ENCODE measurements at regions of chr6 and their contacts with region 1.

Region 1: GRCh38 chr6:28863604-28864320 is 60.0 kb downstream of the TRIM27 start:
- DNase-seq: peak; percentile 60 to 93 (median 89)
- ATAC-seq: peak; percentile 64
- H3K4me3 ChIP-seq: peak overlapping the region; percentile 95
- H3K4me3 Mint-ChIP-seq: peak overlapping the region; percentile 90 to 98 (median 92)
- H3K27ac ChIP-seq: peak overlapping the region; percentile 75
- H3K27ac Mint-ChIP-seq: peak overlapping the region; percentile 89 to 100 (median 95)
- H3K4me1 ChIP-seq: peaks cover 11 to 18% of the 10 kb centered on the region in 2 donors
- H3K4me1 Mint-ChIP-seq: peaks cover 15 to 69% (median 53%) of the 10 kb centered on the region in 7 donors
- H3K27me3 ChIP-seq: no peaks in the 10 kb centered on the region
- H3K27me3 Mint-ChIP-seq: peaks cover 0 to 30% (median 4%) of the 10 kb centered on the region in 5 donors

Region 2: DNA sequence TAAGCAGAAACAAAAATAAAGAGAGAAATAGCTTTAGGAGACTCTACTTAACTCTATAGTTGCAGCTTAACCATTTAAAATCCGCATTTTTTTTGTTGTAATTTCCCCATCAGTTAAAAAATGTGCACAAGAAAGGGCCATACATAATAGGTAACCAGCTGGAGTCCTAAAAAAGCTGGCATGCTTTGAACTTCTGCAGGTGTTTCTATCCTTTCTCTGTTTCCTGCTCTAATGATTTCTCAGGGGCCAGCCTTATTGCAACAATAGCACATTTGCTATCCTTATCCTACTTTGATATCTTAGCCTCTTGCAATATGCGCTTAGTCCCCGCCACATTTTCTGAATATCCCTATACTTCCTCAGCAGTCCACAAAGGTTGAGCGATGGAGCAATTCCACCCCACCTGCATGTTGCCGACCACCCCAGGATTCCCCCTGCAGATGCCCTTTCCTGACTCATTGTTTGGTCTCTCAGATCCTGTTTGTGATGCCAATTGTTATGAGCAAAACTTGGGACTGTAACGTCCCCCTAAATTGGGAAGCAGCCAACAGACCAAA is 11.5 kb after region 1 on chr6:
- CTCF ChIA-PET with region 1: interaction called, 4 read pairs
- POLR2A ChIA-PET with region 1: interaction called, 459 read pairs
- intact Hi-C with region 1: no loop called
- DNase-seq: no peak
- ATAC-seq: no peak
- H3K4me3 ChIP-seq: no peak overlapping the region
- H3K4me3 Mint-ChIP-seq: no peak overlapping the region
- H3K27ac ChIP-seq: no peak overlapping the region
- H3K27ac Mint-ChIP-seq: no peak overlapping the region
- H3K4me1 ChIP-seq: no peaks in the 10 kb centered on the region
- H3K4me1 Mint-ChIP-seq: peaks cover 2 to 8% (median 5%) of the 10 kb centered on the region in 7 donors
- H3K27me3 ChIP-seq: no peaks in the 10 kb centered on the region
- H3K27me3 Mint-ChIP-seq: peaks cover 0 to 28% (median 3%) of the 10 kb centered on the region in 5 donors

Region 3: DNA sequence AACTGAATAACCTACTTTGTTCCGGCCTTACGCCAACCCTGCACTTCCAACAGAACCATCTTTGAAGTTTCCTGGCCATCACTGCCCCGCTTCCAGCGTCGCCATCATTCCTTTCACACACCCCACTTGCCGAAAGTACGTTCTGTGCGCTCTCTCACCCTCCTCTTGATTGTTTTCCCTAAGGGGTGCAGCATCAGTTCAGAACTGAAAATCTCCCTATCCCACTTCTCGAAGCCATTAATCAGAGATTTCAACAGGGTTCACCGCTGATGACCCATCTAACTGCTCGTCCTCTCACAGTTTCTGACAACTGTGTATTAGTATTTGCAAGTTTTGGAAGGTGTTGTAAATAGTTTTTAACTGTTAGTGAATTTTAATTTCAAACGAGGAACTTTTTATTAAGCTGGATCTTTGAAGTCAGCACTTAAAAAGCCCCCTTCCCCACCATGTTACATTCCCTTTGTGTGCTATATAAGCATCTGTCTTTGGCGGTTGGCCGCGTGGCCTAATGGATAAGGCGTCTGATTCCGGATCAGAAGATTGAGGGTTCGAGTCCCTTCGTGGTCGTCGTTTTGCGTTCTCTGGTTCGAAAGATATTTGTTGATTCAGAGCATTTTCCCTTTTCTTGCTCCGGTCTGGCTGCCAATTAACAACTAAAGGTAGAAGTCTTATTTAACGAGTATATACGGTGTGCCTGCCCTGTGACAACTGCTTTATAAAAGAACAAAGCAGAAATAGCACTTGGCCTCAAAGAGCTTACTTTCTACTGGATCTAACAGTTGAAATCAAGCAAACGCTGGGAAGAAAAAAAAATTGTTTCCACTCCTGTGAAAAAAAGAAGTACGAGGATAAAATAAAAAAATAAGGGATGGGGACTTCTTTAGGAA is 17.4 kb after region 1 on chr6:
- CTCF ChIA-PET with region 1: interaction called, 20 read pairs
- POLR2A ChIA-PET with region 1: interaction called, 459 read pairs
- intact Hi-C with region 1: loop called (anchors 1 kb)
- DNase-seq: peak in 8 of 9 donors; percentile 39 to 73 (median 57)
- ATAC-seq: no peak
- H3K4me3 ChIP-seq: peak overlapping the region; percentile 57
- H3K4me3 Mint-ChIP-seq: peak overlapping the region; percentile 12 to 92 (median 89)
- H3K27ac ChIP-seq: peak overlapping the region; percentile 12
- H3K27ac Mint-ChIP-seq: peak overlapping the region; percentile 14 to 98 (median 91)
- H3K4me1 ChIP-seq: peaks cover 8 to 26% of the 10 kb centered on the region in 2 donors
- H3K4me1 Mint-ChIP-seq: peaks cover 19 to 55% (median 45%) of the 10 kb centered on the region in 7 donors
- H3K27me3 ChIP-seq: no peaks in the 10 kb centered on the region
- H3K27me3 Mint-ChIP-seq: peaks cover 0 to 39% (median 3%) of the 10 kb centered on the region in 5 donors